PC-3 (cell line): ENCODE measurements at regions of chrX and their contacts with region 1.

Region 1: DNA sequence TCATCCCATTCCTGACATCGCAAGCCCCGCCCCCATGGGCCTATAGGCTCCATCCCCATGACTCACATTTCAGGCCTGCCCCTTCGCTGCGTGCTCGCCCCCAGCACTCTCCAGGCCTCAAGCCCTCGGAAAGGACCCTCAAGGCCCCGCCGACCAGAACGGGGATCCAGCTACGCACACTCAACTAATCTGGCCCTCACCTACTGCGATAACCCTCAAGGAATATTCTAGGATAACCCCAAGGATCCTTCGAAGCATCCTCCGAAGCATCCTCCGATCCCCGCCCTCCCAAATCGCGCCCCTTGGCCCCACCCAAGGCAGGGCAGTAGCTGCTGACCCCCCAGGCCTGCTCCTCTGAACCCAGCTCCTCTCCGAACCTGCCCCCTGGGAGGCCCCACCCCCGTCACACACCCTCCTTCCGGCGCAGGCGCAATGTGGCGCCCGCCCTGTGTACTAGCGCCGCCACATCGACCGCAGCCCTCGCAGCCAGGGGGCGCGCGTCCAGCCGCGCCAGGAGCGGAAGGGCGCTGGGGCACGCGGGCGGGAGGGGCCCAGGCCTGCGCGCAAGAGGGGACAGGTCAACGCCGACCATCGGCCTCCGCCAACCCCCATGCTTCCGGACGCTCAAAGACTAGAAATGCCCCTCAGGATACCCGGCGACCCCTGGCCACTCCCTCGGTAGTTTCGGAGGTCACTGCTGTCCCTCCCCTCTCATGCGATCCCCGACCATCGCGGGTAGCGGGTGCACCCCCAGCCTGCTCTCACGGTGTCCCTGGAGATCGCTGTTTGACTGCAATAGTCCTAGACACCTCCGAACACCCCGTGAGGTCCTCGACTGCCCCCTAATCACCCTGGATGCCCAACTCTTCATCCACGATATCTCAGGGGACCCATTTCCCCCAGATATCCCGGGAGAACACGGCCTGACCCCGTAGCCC is 6.4 kb upstream of the MAGIX start:
- DNase-seq: peak; percentile 86
- ATAC-seq: peak; percentile 94
- H3K4me3 ChIP-seq: peak overlapping the region; percentile 57
- H3K27ac ChIP-seq: peak overlapping the region; percentile 80
- H3K4me1 ChIP-seq: peaks cover 6% of the 10 kb centered on the region; the same call in 1 of the 2 replicates
- H3K27me3 ChIP-seq: no peaks in the 10 kb centered on the region
- CTCF ChIP-seq: peak; percentile 67

Region 2: GRCh38 chrX:49129427-49129826 is 26.7 kb before region 1 on chrX:
- CTCF ChIA-PET with region 1: interaction called, 4 read pairs
- POLR2A ChIA-PET with region 1: interaction called, 22 read pairs
- intact Hi-C with region 1: loop called (anchors 5 kb)
- DNase-seq: no peak
- ATAC-seq: no peak
- H3K4me3 ChIP-seq: no peak overlapping the region
- H3K27ac ChIP-seq: no peak overlapping the region
- H3K4me1 ChIP-seq: no peaks in the 10 kb centered on the region
- H3K27me3 ChIP-seq: no peaks in the 10 kb centered on the region
- CTCF ChIP-seq: no peak

Region 3: DNA sequence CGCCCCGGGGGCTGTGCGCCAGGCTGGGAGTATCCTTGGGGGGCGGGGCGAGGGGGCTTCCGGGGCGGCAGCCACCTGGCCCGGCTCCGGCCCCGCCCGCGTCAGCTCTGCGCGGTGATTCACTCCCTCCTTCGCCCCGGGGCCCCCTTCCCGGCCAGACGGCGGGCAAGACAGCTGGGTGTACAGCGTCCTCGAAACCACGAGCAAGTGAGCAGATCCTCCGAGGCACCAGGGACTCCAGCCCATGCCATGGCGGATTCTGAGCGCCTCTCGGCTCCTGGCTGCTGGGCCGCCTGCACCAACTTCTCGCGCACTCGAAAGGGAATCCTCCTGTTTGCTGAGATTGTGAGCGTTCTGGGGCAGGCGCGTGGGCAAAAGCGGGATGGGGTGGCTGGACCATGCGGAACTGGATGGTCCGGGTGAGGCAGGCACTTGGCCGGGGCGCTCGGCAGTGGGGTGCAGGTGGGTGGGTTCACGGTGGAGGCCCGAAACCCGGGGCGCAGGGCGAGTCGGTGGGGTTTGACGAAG is 15.6 kb after region 1 on chrX and contains the start of gene PLP2:
- CTCF ChIA-PET with region 1: interaction called, 15 read pairs
- POLR2A ChIA-PET with region 1: interaction called, 5 read pairs
- intact Hi-C with region 1: no loop called
- DNase-seq: peak; percentile 75
- ATAC-seq: peak; percentile 64
- H3K4me3 ChIP-seq: peak within 1 kb of the TSS; percentile 78
- H3K27ac ChIP-seq: peak within 1 kb of the TSS; percentile 82
- H3K4me1 ChIP-seq: peaks cover 20% of the 10 kb centered on the region; the same call in 1 of the 2 replicates
- H3K27me3 ChIP-seq: no peaks in the 10 kb centered on the region
- CTCF ChIP-seq: no peak
- total RNA-seq, gene PLP2: 165 and 171 TPM in 2 replicates